Activated naive CD4-positive, alpha-beta T cell treated with anti-CD3 and anti-CD28 coated beads for 36 hours (primary cell): ENCODE measurements at regions of chr3 and their contacts with region 1.

Region 1: GRCh38 chr3:138118612-138119422 is 3.4 kb upstream of the DZIP1L start:
- DNase-seq: peak; percentile 76
- H3K4me3 Mint-ChIP-seq: no peak overlapping the region
- H3K27ac Mint-ChIP-seq: no peak overlapping the region
- H3K4me1 Mint-ChIP-seq: peaks cover 5% of the 10 kb centered on the region
- H3K27me3 Mint-ChIP-seq: peaks cover 32% of the 10 kb centered on the region

Region 2: GRCh38 chr3:137669519-137670060 is 449.2 kb before region 1 on chr3:
- CTCF ChIA-PET with region 1: no interaction called
- intact Hi-C with region 1: no loop called
- DNase-seq: no peak
- H3K4me3 Mint-ChIP-seq: no peak overlapping the region
- H3K27ac Mint-ChIP-seq: no peak overlapping the region
- H3K4me1 Mint-ChIP-seq: no peaks in the 10 kb centered on the region
- H3K27me3 Mint-ChIP-seq: no peaks in the 10 kb centered on the region

Region 3: GRCh38 chr3:138082085-138082991 is 36.5 kb before region 1 on chr3:
- CTCF ChIA-PET with region 1: interaction called, 11 read pairs
- intact Hi-C with region 1: no loop called
- DNase-seq: peak; percentile 29
- H3K4me3 Mint-ChIP-seq: peak overlapping the region; percentile 36
- H3K27ac Mint-ChIP-seq: peak overlapping the region; percentile 63
- H3K4me1 Mint-ChIP-seq: peaks cover 29% of the 10 kb centered on the region
- H3K27me3 Mint-ChIP-seq: peaks cover 9% of the 10 kb centered on the region

Region 4: DNA sequence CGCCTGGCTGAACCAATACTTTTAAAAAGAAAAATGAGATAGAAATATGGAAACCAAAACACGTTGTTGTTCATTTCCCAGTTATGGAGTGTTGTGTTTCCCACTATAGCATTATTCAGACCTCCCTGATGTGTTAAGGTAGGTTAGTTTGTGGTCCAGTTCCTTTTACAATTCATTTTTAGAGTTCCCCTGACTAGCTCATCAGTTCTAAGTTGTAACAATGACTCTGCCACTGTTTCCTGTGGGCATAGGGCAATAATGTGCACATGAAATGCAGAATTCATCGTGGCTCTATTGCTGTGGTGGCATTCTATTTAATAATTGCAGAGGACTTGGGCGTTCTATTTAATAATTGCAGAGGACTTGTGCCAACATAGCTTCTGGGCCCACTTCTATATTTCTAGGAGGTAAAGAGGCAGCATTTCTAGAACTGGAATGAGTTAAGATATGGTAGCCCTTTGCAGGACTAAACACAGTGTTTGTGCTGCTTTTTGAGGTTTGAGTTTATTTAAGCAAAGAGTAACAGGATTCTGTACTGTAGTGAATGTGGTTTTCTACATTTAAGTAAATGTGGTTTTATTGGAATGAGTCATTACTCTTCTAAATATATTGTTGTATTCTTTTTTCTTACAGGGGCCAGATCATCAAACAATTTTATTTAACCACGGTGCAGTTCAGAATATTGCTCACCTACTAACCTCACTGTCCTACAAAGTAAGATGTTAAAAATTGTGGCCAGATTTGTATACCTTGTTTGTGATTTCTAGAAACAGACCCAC is 115.8 kb after region 1 on chr3:
- CTCF ChIA-PET with region 1: no interaction called
- intact Hi-C with region 1: no loop called
- DNase-seq: no peak
- H3K4me3 Mint-ChIP-seq: no peak overlapping the region
- H3K27ac Mint-ChIP-seq: no peak overlapping the region
- H3K4me1 Mint-ChIP-seq: peaks cover 25% of the 10 kb centered on the region
- H3K27me3 Mint-ChIP-seq: no peaks in the 10 kb centered on the region

Region 5: GRCh38 chr3:138434276-138434874 is 315.6 kb after region 1 on chr3 and contains the start of gene ESYT3:
- CTCF ChIA-PET with region 1: no interaction called
- intact Hi-C with region 1: loop called (anchors 5 kb)
- DNase-seq: peak; percentile 82
- H3K4me3 Mint-ChIP-seq: peak within 1 kb of the TSS; percentile 75
- H3K27ac Mint-ChIP-seq: no peak within 1 kb of the TSS
- H3K4me1 Mint-ChIP-seq: peaks cover 11% of the 10 kb centered on the region
- H3K27me3 Mint-ChIP-seq: peaks cover 55% of the 10 kb centered on the region
- total RNA-seq, gene ESYT3: 0.96 to 1.1 TPM